A549 (cell line): ENCODE measurements at regions of chr6 and their contacts with region 1.

Region 1: GRCh38 chr6:33711140-33712129 is at the start of gene UQCC2:
- DNase-seq: peak; percentile 87 to 95
- ATAC-seq: peak; percentile 88 to 97
- H3K4me3 ChIP-seq: peak within 1 kb of the TSS; percentile 73
- H3K27ac ChIP-seq: peak within 1 kb of the TSS; percentile 98 to 99
- H3K4me1 ChIP-seq: peaks cover 10% of the 10 kb centered on the region; the same call in 2 of the 3 replicates
- CTCF ChIP-seq: peak; percentile 64
- EP300 ChIP-seq: no peak
- POLR2A ChIP-seq: peak; percentile 50
- RAD21 ChIP-seq: peak; percentile 70
- polyA plus RNA-seq, gene UQCC2: 65.5 and 90.8 TPM in 2 replicates

Region 2: DNA sequence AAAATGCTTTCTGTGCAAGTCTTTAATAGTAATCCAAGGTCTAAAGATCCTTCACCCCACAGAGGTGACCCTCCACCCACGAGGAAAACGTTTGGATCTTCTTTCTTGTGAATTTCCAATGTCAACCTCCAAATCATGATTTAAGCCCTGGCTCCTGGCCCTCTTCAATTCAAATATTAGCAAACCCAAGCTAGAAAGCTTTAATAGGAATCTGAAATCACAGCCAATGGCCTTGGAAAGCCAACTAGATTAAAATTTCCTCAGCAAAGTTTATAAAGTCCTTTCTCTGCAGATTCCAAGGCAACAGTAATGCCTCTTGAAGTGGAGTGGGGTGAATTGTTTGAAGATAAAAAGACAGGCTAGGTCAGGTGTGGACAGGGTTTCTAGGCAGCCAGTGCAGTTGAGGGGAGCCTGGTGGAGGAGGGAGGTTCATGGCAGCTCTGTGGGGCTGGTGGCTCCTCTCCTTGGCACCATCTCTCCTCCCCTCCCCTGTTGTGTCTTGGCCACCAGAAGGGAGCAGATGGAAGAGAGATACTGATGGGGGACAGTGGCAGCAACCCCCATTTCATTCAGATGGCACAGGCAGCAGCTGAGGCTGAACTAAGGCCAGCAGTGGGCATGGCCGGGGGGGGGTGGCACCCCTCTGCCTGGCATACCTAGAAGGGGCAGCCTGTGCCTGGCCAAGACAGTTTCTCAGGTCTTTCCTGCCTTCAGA is 12.1 kb after region 1 on chr6:
- CTCF ChIA-PET with region 1: interaction called, 18 read pairs
- POLR2A ChIA-PET with region 1: interaction called, 3 read pairs
- DNase-seq: no peak
- ATAC-seq: no peak
- H3K4me3 ChIP-seq: no peak overlapping the region
- H3K27ac ChIP-seq: no peak overlapping the region
- H3K4me1 ChIP-seq: no peaks in the 10 kb centered on the region
- CTCF ChIP-seq: no peak
- EP300 ChIP-seq: no peak
- POLR2A ChIP-seq: no peak
- RAD21 ChIP-seq: no peak

Region 3: DNA sequence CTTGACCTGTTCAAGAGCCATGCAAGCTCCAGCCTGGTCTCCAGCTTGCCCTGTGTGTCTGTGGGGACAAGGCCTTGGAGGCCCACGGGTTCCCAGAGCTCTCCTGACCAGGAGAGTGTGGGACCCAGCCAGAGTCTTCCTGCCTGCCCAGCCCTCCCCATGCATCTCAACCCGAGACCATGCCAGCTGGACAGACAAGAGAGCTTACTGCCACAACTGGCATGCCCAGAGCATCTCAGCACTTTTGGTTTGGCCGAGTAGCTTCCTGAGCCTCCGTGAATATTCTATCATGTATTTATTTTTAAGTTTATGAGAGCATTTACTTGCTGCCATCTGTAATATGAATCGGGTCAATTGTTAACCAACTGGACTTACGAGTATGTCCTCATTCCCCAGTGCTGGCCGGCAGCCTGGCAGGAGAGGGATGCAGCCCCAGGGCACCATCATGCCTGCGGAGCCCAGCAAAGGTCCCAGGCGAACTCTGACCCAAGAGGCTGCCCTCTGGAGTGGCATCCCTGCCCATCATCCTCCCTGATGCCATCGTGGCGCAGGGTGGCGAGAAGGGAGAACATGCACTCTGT is 20.4 kb after region 1 on chr6:
- CTCF ChIA-PET with region 1: interaction called, 10 read pairs
- POLR2A ChIA-PET with region 1: no interaction called
- DNase-seq: no peak
- ATAC-seq: no peak
- H3K4me3 ChIP-seq: no peak overlapping the region
- H3K27ac ChIP-seq: no peak overlapping the region; a peak in 1 of 6 replicates
- H3K4me1 ChIP-seq: no peaks in the 10 kb centered on the region
- CTCF ChIP-seq: no peak
- EP300 ChIP-seq: no peak
- POLR2A ChIP-seq: no peak
- RAD21 ChIP-seq: no peak

Region 4: GRCh38 chr6:33751771-33752645 is 40.6 kb after region 1 on chr6:
- CTCF ChIA-PET with region 1: interaction called, 10 read pairs
- POLR2A ChIA-PET with region 1: interaction called, 4 read pairs
- DNase-seq: no peak
- ATAC-seq: no peak
- H3K4me3 ChIP-seq: no peak overlapping the region
- H3K27ac ChIP-seq: peak overlapping the region in 1 of 2 experiments; percentile 19; a peak in 2 of 6 replicates
- H3K4me1 ChIP-seq: peaks cover under 1% of the 10 kb centered on the region; the same call in 1 of the 3 replicates
- CTCF ChIP-seq: no peak
- EP300 ChIP-seq: no peak
- POLR2A ChIP-seq: no peak
- RAD21 ChIP-seq: no peak

Region 5: GRCh38 chr6:33761922-33762629 is 50.6 kb after region 1 on chr6:
- CTCF ChIA-PET with region 1: interaction called, 12 read pairs
- POLR2A ChIA-PET with region 1: interaction called, 4 read pairs
- DNase-seq: peak; percentile 40 to 59
- ATAC-seq: peak; percentile 86 to 93
- H3K4me3 ChIP-seq: no peak overlapping the region
- H3K27ac ChIP-seq: peak overlapping the region; percentile 63 to 65; a peak in 4 of 6 replicates
- H3K4me1 ChIP-seq: peaks cover 27% of the 10 kb centered on the region
- CTCF ChIP-seq: peak; percentile 64
- EP300 ChIP-seq: no peak
- POLR2A ChIP-seq: no peak
- RAD21 ChIP-seq: peak; percentile 69 to 77